Activated CD8-positive, alpha-beta T cell treated with anti-CD3 and anti-CD28 coated beads for 36 hours (primary cell): ENCODE measurements at regions of chr19 and their contacts with region 1.

Region 1: GRCh38 chr19:38514812-38515633 is 81.5 kb downstream of the RYR1 start:
- DNase-seq: peak; percentile 81
- ATAC-seq: peak; percentile 96
- H3K4me3 Mint-ChIP-seq: no peak overlapping the region
- H3K27ac Mint-ChIP-seq: no peak overlapping the region
- H3K4me1 Mint-ChIP-seq: peaks cover 15% of the 10 kb centered on the region
- H3K27me3 Mint-ChIP-seq: peaks cover 3% of the 10 kb centered on the region
- CTCF ChIP-seq: peak; percentile 95

Region 2: DNA sequence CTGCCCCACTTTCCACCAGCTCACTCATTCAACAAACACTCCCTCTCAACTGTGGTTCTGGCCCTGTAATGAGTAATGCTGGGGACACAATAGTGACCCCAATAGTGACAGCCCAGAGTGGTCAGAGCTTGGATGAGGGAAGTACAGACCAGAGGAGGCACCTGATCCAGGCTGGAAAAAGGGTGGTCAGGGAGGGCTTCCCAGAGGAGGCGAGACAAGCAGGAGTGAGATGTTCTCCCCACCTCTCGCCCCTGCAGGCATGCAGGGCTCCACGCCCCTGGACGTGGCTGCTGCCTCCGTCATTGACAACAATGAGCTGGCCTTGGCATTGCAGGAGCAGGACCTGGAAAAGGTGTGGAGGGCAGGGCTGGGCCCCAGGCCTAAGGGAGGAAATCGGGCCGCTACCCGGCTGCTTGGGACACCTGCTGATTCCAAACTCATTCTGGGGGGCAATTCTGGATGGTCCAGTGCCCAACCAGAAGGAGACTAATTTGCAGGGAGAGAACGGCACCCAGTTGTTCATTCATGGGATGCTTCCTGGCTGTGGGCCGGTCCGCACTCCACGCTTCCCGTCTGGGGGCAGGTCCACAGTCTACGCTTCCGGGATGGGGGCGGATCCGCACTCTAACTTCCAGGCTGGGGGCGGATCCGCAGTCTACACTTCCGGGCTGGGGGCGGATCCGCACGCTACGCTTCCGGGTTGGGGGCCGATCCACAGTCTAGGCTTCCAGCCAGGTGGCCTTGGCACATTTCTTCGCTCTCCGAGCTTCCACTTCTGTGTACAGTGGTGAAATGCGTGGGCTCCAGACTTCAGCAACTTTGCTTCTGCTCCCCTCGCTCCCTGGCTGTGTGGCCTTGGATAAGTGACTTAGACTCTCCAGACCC is 18.2 kb before region 1 on chr19:
- CTCF ChIA-PET with region 1: no interaction called
- POLR2A ChIA-PET with region 1: no interaction called
- intact Hi-C with region 1: no loop called
- DNase-seq: no peak
- ATAC-seq: no peak
- H3K4me3 Mint-ChIP-seq: no peak overlapping the region
- H3K27ac Mint-ChIP-seq: no peak overlapping the region
- H3K4me1 Mint-ChIP-seq: no peaks in the 10 kb centered on the region
- H3K27me3 Mint-ChIP-seq: peaks cover 9% of the 10 kb centered on the region
- CTCF ChIP-seq: no peak

Region 3: GRCh38 chr19:38534574-38534973 is 19.6 kb after region 1 on chr19:
- CTCF ChIA-PET with region 1: interaction called, 10 read pairs
- POLR2A ChIA-PET with region 1: interaction called, 3 read pairs
- intact Hi-C with region 1: no loop called
- DNase-seq: no peak
- ATAC-seq: no peak
- H3K4me3 Mint-ChIP-seq: no peak overlapping the region
- H3K27ac Mint-ChIP-seq: no peak overlapping the region
- H3K4me1 Mint-ChIP-seq: peaks cover 33% of the 10 kb centered on the region
- H3K27me3 Mint-ChIP-seq: peaks cover 8% of the 10 kb centered on the region
- CTCF ChIP-seq: no peak

Region 4: DNA sequence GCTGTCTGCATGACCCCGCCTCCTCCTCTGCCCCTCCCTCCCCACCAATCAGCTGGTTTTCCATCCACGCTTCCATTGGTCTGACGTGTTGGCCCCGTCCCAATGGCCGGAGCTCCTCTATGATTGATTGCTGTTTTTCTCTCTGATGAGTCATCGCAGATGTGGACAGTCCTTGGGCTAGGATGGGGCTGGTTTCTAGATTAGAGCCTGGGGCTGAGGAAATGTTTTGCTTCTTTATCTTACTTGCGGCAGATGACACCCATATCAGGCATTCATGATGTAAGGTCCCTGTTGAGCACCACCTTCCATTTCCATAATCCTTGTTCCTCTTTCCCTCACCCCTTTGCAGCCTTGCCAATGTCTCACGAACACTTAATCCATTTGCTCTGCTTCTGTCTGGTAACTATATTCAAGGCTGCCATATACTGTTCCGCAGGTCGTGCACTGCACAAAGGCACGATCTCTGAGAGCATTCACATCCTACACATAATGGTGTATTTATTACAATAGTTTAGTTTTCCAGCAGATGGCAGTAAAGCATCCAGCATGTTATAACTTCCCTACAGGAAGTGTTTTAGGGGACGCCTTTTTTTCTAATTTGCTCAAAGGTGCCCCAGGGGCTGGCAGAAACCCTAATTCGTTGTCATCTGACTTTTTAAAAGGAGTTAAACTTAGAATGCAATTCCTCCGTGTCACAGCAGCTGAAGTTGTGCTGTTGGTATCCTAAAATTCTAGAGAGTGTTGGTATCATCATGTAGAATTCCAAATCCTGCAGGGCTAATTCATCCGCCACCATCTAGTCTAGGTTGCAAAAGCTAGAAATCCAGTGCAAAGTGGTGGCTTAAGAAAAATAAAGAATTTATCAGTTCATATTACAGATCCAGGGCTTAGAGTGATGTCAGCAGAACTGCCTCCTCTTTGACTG is 29.3 kb after region 1 on chr19:
- CTCF ChIA-PET with region 1: interaction called, 15 read pairs
- POLR2A ChIA-PET with region 1: interaction called, 3 read pairs
- intact Hi-C with region 1: no loop called
- DNase-seq: peak; percentile 50
- ATAC-seq: peak; percentile 92
- H3K4me3 Mint-ChIP-seq: no peak overlapping the region
- H3K27ac Mint-ChIP-seq: no peak overlapping the region
- H3K4me1 Mint-ChIP-seq: peaks cover 20% of the 10 kb centered on the region
- H3K27me3 Mint-ChIP-seq: no peaks in the 10 kb centered on the region
- CTCF ChIP-seq: peak; percentile 68

Region 5: DNA sequence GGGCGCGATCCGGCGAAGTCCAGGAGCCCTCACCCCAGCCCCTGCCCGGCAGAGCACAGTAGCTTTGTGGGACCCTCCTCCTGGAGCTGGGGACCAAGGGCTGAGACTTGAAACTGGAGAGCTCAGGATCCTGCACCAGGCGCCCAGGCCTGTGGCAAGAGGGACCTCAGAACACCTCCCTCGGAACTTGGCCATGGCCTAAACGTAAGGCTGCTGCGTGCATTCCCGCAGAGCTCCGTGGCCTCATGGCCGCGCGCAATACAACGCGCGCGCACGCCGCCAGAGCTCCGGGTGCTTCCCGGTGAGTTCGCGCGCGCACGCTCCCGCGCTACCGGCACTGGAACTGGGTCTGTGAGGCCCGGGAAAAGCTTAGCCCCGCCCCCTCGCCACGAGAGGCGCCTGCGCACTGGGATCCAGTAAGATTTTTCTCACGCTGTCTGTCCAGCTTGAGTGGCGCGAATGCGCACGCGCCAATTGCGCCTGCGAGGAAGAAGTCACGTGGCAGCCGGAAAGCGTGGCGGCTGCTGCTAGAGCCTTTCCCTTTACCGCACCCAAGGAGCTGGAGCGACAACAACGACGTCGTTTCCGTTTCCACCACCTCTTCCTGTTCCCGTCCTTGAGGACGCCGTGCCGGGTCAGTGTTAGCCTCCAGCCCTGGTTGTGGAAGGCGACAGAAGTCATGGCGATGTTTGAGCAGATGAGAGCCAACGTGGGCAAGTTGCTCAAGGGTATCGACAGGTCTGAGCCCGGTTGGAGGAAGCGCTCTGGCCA is 103.8 kb after region 1 on chr19 and contains the start of gene EIF3K:
- CTCF ChIA-PET with region 1: interaction called, 25 read pairs
- POLR2A ChIA-PET with region 1: interaction called, 7 read pairs
- intact Hi-C with region 1: no loop called
- DNase-seq: peak; percentile 99
- ATAC-seq: peak; percentile 74
- H3K4me3 Mint-ChIP-seq: peak within 1 kb of the TSS; percentile 99
- H3K27ac Mint-ChIP-seq: peak within 1 kb of the TSS; percentile 99
- H3K4me1 Mint-ChIP-seq: peaks cover 44% of the 10 kb centered on the region
- H3K27me3 Mint-ChIP-seq: no peaks in the 10 kb centered on the region
- CTCF ChIP-seq: no peak
- total RNA-seq, gene EIF3K: 306 to 308 TPM

Region 6: DNA sequence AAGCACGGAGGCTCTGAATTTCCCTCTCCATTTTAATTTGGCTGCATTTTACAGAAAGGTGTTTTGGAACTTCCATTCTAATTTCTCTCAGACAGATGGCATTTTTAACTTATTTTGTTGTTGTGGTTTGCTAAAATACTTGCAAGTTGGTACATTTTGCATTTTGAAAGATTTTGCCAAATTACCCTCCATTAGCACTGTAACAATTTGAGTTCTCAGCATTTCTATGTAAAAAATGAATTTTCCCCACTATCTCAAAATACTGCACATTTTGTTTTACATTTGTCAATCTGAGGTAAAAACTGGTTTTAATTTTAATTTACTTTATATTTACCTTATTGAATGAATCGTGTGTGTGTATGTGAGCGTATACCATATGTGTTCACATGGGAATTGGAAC is 341.8 kb after region 1 on chr19:
- CTCF ChIA-PET with region 1: no interaction called
- POLR2A ChIA-PET with region 1: no interaction called
- intact Hi-C with region 1: no loop called
- DNase-seq: no peak
- ATAC-seq: no peak
- H3K4me3 Mint-ChIP-seq: peak overlapping the region; percentile 1
- H3K27ac Mint-ChIP-seq: peak overlapping the region; percentile 57
- H3K4me1 Mint-ChIP-seq: peaks cover 32% of the 10 kb centered on the region
- H3K27me3 Mint-ChIP-seq: no peaks in the 10 kb centered on the region
- CTCF ChIP-seq: no peak